Activated naive CD4-positive, alpha-beta T cell treated with anti-CD3 and anti-CD28 coated beads for 36 hours (primary cell): ENCODE measurements at regions of chr3 and their contacts with region 1.

Region 1: GRCh38 chr3:12135029-12135657 is 23.6 kb downstream of the TIMP4 start:
- DNase-seq: peak; percentile 80
- H3K4me3 Mint-ChIP-seq: no peak overlapping the region
- H3K27ac Mint-ChIP-seq: no peak overlapping the region
- H3K4me1 Mint-ChIP-seq: no peaks in the 10 kb centered on the region
- H3K27me3 Mint-ChIP-seq: peaks cover 11% of the 10 kb centered on the region

Region 2: GRCh38 chr3:11910971-11911531 is 224.1 kb before region 1 on chr3:
- CTCF ChIA-PET with region 1: no interaction called
- intact Hi-C with region 1: no loop called
- DNase-seq: no peak
- H3K4me3 Mint-ChIP-seq: no peak overlapping the region
- H3K27ac Mint-ChIP-seq: no peak overlapping the region
- H3K4me1 Mint-ChIP-seq: no peaks in the 10 kb centered on the region
- H3K27me3 Mint-ChIP-seq: peaks cover 2% of the 10 kb centered on the region

Region 3: DNA sequence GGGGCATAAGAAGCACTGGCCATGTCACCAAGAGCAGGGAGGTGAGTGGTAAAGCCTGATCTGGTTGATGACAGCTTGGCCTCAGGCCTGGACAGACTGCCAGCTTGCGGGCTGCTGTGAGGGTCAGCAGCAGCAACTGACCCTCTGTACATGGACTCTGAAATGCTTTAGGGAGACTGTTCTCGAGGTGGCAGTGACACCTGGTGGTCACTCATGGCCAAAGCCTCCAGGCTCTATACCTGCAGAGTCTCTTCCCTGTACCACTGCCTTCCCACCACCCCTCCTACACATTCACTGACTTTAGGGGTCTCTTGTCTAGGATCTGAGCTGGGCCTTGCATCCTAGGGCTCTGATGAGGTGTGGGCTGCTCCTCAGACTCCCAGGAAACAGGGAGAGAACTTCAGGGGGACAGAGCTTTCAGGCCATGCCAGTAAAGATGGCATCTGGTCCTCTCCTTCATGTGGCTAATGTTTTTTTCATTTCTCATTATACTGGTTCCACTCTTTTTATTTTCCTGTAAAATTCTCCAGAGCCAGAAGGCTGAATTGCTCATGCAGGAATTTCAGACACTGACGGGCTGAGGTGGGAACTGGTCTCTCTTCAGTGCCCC is 40.8 kb after region 1 on chr3:
- CTCF ChIA-PET with region 1: interaction called, 59 read pairs
- intact Hi-C with region 1: loop called (anchors 1 kb)
- DNase-seq: peak; percentile 62
- H3K4me3 Mint-ChIP-seq: no peak overlapping the region
- H3K27ac Mint-ChIP-seq: no peak overlapping the region
- H3K4me1 Mint-ChIP-seq: peaks cover 14% of the 10 kb centered on the region
- H3K27me3 Mint-ChIP-seq: peaks cover 1% of the 10 kb centered on the region

Region 4: GRCh38 chr3:12287727-12288191 is 152.6 kb after region 1 on chr3:
- CTCF ChIA-PET with region 1: interaction called, 3 read pairs
- intact Hi-C with region 1: loop called (anchors 10 kb)
- DNase-seq: peak; percentile 9
- H3K4me3 Mint-ChIP-seq: peak overlapping the region; percentile 50
- H3K27ac Mint-ChIP-seq: no peak overlapping the region
- H3K4me1 Mint-ChIP-seq: peaks cover 5% of the 10 kb centered on the region
- H3K27me3 Mint-ChIP-seq: peaks cover 46% of the 10 kb centered on the region

Region 5: DNA sequence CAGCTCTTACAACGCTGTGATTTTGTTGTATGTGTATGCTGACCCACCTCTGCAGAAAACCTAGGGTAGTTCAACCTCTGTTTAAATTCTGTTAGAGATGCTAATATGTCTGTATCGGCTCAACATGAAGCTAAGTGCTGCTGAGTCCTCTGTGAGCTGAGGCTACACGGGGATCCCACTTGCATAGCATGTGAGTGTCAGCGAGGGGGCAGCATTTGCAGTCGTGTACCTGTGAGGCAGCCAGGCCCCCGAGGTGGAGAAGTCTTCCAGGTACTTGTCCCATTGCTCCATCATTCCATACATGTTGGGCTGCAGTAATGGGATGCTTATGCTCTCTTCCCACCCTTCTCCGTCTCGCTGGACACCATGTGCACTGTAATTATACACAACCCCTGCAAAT is 406.5 kb after region 1 on chr3:
- CTCF ChIA-PET with region 1: no interaction called
- intact Hi-C with region 1: loop called (anchors 1 kb)
- DNase-seq: no peak
- H3K4me3 Mint-ChIP-seq: no peak overlapping the region
- H3K27ac Mint-ChIP-seq: no peak overlapping the region
- H3K4me1 Mint-ChIP-seq: peaks cover 2% of the 10 kb centered on the region
- H3K27me3 Mint-ChIP-seq: no peaks in the 10 kb centered on the region

Region 6: GRCh38 chr3:12719984-12720898 is 585.1 kb after region 1 on chr3:
- CTCF ChIA-PET with region 1: no interaction called
- intact Hi-C with region 1: loop called (anchors 2 kb)
- DNase-seq: peak; percentile 83
- H3K4me3 Mint-ChIP-seq: peak overlapping the region; percentile 56
- H3K27ac Mint-ChIP-seq: no peak overlapping the region
- H3K4me1 Mint-ChIP-seq: peaks cover 9% of the 10 kb centered on the region
- H3K27me3 Mint-ChIP-seq: no peaks in the 10 kb centered on the region